ENCODE measurements at regions of chr20 and their contacts with region 1.

Region 1: GRCh38 chr20:3248167-3248992 is 9.4 kb upstream of the SLC4A11 start:
- DNase-seq: no peak
- ATAC-seq: peak; percentile 88
- H3K4me3 ChIP-seq: peak overlapping the region; percentile 22 to 47
- H3K27ac ChIP-seq: peak overlapping the region; percentile 60; the same call in 1 of the 2 replicates
- H3K4me1 ChIP-seq: peaks cover 21% of the 10 kb centered on the region
- H3K27me3 ChIP-seq: no peaks in the 10 kb centered on the region
- CTCF ChIP-seq: no peak; the same call in 1 of the 2 replicates

Region 2: GRCh38 chr20:2900845-2901592 is 347.4 kb before region 1 on chr20:
- CTCF ChIA-PET with region 1: no interaction called
- POLR2A ChIA-PET with region 1: interaction called, 12 read pairs
- in situ Hi-C with region 1: no loop called
- intact Hi-C with region 1: no loop called
- DNase-seq: no peak
- ATAC-seq: no peak
- H3K4me3 ChIP-seq: no peak overlapping the region
- H3K27ac ChIP-seq: no peak overlapping the region
- H3K4me1 ChIP-seq: no peaks in the 10 kb centered on the region
- H3K27me3 ChIP-seq: no peaks in the 10 kb centered on the region
- CTCF ChIP-seq: no peak

Region 3: DNA sequence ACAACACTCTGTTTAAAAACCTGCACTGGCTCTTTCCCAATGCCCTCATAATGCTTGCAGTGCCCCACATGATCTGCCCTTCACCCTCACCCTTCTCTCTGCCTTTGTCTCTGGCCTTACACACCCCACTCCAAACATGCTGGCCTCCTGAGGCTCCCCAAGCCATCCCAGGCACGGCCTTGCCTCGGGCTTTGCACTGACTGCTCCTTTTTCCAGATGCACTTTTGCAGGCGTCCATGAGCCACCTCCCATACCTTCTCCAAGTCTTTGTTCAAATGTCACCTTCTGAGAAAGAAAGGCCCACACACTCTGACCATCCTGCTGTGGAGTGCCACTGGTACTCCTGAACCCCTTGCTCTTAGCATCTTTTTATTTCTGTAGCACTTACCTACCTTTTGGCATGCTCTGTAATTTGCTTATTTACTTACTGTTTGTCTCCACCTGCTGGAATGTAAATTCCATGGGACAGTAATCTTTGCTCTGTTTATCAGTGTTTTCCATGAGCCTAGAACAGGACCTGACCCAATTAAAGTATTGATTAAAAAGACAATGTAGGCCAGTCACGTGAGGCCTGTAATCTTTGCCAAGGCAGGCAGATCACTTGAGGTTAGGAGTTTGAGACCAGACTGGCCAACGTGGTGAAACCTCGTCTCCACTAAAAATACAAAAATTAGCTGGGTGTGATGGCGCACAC is 384.1 kb after region 1 on chr20:
- CTCF ChIA-PET with region 1: no interaction called
- POLR2A ChIA-PET with region 1: interaction called, 10 read pairs
- in situ Hi-C with region 1: no loop called
- intact Hi-C with region 1: no loop called
- DNase-seq: no peak
- ATAC-seq: no peak
- H3K4me3 ChIP-seq: no peak overlapping the region
- H3K27ac ChIP-seq: no peak overlapping the region
- H3K4me1 ChIP-seq: no peaks in the 10 kb centered on the region
- H3K27me3 ChIP-seq: no peaks in the 10 kb centered on the region
- CTCF ChIP-seq: no peak; the same call in 1 of the 2 replicates

Measured in Panc1 (cell line).